ENCODE measurements at regions of chr2 and their contacts with region 1.

Region 1: GRCh38 chr2:236180831-236181453 is 12.8 kb upstream of the GBX2 start:
- DNase-seq: no peak
- H3K4me3 ChIP-seq: no peak overlapping the region
- H3K27ac ChIP-seq: no peak overlapping the region
- H3K4me1 ChIP-seq: peaks cover 0 to 26% (median 18%) of the 10 kb centered on the region in 6 donors
- H3K27me3 ChIP-seq: peaks cover 12 to 99% (median 66%) of the 10 kb centered on the region in 7 donors
- CTCF ChIP-seq: peak in 9 of 11 experiments; percentile 6 to 62 (median 48)
- POLR2A ChIP-seq: no peak

Region 2: DNA sequence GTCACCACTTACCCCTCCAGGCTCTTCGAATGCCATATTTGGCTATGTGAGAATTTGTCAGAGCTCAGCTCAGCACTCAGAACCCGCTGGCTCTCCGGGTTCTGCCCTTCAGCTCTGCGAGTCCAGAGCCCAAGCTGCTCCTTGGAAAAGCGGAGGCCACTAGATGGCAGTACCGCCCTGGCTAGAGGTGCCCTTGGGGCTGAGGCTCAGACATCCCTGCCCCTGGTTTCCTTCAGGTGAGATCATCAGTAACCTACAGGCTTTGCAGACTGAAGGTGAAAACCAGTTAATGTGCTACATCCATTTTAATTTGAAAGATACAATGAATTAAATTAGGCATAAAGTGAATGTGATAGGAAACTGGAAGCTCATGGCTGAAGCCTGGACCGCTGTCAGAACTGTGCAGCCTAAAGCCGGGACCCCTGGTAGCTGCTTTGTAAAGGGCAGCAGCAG is 401.5 kb before region 1 on chr2:
- intact Hi-C with region 1: loop called (anchors 10 kb)
- DNase-seq: no peak
- H3K4me3 ChIP-seq: no peak overlapping the region
- H3K27ac ChIP-seq: no peak overlapping the region
- H3K4me1 ChIP-seq: no peaks in the 10 kb centered on the region
- H3K27me3 ChIP-seq: peaks cover 0 to 6% (median 0%) of the 10 kb centered on the region in 7 donors
- CTCF ChIP-seq: peak in 10 of 11 experiments; percentile 29 to 72 (median 58)
- POLR2A ChIP-seq: no peak

Region 3: DNA sequence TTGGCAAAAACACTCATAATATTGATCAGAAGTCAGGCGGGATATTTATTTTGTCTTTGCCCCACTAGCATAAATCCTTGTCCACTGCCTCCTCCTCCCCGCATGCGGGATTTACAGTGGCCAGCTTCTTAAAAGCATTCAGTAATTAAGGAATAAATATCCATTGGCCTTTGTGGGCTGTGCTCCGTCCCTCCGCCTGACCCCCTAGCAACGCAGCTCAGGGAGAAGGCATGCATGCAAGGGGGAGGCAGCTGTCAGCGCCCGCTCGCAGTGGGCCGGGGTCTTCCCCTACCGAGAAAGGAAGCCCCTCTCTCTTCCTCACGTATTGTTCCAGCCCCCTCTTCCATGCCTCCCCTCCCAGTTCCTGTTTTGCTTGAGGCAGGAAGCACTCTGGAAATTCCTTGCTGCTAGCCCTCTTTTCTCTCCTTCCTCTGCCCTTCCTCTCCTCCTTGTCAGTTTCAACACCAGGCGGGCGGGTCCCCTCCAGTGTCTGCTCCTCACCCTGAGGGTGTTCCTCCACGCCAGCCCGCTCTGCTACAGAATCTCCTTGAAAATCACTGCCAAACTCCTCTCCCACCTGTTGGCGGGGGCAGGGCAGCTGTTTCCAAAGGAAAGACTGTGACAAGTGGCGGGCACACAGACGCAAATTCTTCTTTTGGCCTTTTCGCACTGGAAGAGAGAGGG is 72.9 kb before region 1 on chr2:
- intact Hi-C with region 1: no loop called
- DNase-seq: peak; percentile 70
- H3K4me3 ChIP-seq: no peak overlapping the region
- H3K27ac ChIP-seq: no peak overlapping the region
- H3K4me1 ChIP-seq: peaks cover 0 to 34% (median 21%) of the 10 kb centered on the region in 6 donors
- H3K27me3 ChIP-seq: no peaks in the 10 kb centered on the region
- CTCF ChIP-seq: no peak
- POLR2A ChIP-seq: no peak